B cell (primary cell): ENCODE measurements at regions of chr7 and their contacts with region 1.

Region 1: DNA sequence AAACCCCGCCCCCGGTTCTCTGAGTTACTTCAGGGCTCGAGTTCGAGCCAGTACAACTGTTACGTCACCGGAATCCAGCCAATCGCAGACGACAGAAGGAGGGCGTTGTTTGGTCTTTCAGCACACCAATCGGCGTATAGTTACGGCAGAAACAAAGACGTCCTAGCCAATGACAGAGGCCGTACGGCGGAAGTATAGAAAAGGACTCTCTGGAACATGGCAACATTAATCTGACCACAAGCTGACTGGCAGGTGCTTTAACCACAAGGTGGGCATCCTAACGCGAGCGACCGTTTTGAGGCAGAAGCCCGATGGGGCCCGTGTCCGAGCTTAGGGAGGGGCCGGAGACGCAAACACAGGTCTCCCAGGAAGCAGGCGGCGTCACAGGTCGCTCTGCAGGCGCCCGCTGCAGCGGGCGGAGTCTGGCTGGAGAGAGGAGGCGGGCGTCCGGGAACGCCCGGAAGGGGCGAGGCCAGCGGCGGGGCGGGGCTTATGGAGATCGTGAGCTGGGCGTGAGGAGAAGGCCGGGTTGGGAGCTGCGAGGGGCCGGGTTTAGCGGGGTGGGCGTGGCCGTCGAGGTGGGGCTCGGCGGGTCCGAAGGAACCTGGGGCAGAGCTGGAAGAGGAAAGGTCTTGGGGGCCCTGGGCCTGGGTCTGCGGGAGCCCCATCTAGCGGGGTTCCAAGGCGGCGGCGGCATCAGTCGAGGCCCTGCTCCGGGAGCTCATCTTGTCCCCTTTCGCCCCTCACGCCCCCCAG is at the start of gene MOSPD3:
- DNase-seq: peak; percentile 99
- ATAC-seq: peak; percentile 91
- H3K4me3 ChIP-seq: peak within 1 kb of the TSS; percentile 53 to 93 (median 84)
- H3K4me3 Mint-ChIP-seq: peak within 1 kb of the TSS; percentile 93
- H3K27ac ChIP-seq: peak within 1 kb of the TSS; percentile 82
- H3K27ac Mint-ChIP-seq: peak within 1 kb of the TSS; percentile 99
- H3K4me1 ChIP-seq: peaks cover 13 to 19% of the 10 kb centered on the region in 2 donors
- H3K4me1 Mint-ChIP-seq: peaks cover 18% of the 10 kb centered on the region
- H3K27me3 ChIP-seq: no peaks in the 10 kb centered on the region
- H3K27me3 Mint-ChIP-seq: no peaks in the 10 kb centered on the region
- CTCF ChIP-seq: no peak
- total RNA-seq, gene MOSPD3: 17.3 and 18.8 TPM in 2 replicates

Region 2: DNA sequence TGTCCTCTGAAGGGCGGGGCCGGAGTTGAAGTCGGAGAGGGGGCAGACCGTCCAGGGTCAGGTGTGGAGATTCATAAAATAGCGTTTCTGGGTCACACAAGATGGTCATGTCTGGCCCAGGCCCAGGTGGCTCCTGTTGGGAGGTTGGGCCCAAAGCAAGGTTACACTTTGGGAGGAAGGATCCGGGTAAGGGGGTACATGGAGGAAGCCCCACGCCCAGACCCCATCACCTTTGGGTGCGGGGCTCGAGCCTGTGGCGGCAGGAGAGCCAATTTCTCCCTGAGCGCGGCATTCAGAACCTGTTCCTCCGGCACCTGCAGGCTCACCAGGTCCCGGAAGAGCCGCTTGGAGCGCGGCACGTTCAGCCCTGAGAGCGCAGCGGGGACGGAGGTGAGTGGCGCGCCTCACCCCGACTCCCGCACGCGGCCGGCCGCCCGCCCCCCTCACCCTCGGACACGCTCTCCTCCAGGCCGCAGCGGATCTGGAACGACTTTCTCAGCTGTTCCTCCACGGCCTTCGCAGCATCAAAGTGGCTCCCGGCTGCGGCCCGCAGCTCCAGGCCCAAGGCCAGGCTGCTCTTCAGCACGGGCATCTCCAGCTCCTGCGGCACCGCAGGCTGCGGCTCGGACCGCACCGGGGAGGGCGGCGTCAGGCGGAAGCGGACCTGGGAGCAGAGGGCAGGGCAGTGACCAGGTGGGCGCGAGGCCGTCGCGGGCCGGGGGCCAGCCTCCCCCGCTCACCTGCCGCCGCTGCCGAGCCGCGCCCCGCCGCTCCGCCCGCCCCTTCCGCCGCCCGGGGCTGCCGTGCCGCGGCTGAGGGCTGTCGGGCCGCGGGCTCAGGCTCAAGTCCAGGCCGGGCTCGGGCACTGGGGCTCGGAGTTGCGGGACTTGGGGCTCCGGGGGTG is 176.5 kb before region 1 on chr7:
- CTCF ChIA-PET with region 1: interaction called, 3 read pairs
- POLR2A ChIA-PET with region 1: no interaction called
- intact Hi-C with region 1: loop called (anchors 1 kb)
- DNase-seq: peak; percentile 81
- ATAC-seq: peak; percentile 28
- H3K4me3 ChIP-seq: peak overlapping the region; percentile 39 to 96 (median 81)
- H3K4me3 Mint-ChIP-seq: peak overlapping the region; percentile 98
- H3K27ac ChIP-seq: peak overlapping the region; percentile 87 to 91
- H3K27ac Mint-ChIP-seq: peak overlapping the region; percentile 99
- H3K4me1 ChIP-seq: peaks cover 26 to 46% of the 10 kb centered on the region in 2 donors
- H3K4me1 Mint-ChIP-seq: peaks cover 50% of the 10 kb centered on the region
- H3K27me3 ChIP-seq: no peaks in the 10 kb centered on the region
- H3K27me3 Mint-ChIP-seq: no peaks in the 10 kb centered on the region
- CTCF ChIP-seq: no peak

Region 3: DNA sequence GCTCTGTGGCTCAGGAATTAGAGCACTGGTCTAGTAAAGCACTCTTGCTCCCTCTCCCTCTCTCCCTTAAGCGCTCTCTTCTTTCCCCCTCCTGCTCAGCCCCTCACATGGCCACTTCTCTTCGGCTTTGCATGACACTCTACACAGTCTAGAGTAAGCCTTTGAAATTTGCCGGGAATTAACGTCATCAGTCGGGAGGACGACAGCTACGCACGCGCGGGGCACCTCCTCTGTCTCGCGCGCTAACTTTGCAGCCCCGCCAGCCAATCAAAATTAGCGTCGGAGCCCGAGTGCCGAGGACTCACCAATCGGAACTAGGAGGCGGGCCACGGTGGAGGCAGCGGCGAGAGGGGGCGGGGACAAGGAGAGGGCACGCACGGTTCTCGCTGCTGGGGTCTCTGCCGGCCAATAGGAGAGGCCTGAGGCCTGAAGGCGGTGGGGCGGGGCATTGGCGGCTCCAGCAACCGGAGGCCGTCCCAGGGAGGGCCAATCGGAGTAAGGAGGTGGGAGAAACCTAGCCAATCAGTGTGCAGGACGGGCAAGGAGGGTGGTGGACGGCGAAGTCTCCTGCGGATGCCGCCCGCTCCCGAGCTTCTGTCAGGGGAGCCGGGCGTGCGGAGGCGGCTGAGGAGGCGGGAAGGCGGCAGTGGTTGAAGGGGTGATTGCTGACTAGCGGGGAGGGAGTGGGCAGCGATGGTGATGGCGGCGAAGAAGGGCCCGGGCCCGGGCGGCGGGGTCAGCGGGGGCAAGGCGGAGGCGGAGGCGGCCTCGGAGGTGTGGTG is 73.3 kb before region 1 on chr7 and contains the start of gene AGFG2:
- CTCF ChIA-PET with region 1: no interaction called
- POLR2A ChIA-PET with region 1: no interaction called
- intact Hi-C with region 1: loop called (anchors 1 kb)
- DNase-seq: peak; percentile 100
- ATAC-seq: peak; percentile 97
- H3K4me3 ChIP-seq: peak within 1 kb of the TSS; percentile 62 to 84 (median 72)
- H3K4me3 Mint-ChIP-seq: peak within 1 kb of the TSS; percentile 91
- H3K27ac ChIP-seq: peak within 1 kb of the TSS in 1 of 2 donors; percentile 42
- H3K27ac Mint-ChIP-seq: peak within 1 kb of the TSS; percentile 76
- H3K4me1 ChIP-seq: peaks cover 14 to 23% of the 10 kb centered on the region in 2 donors
- H3K4me1 Mint-ChIP-seq: peaks cover 36% of the 10 kb centered on the region
- H3K27me3 ChIP-seq: no peaks in the 10 kb centered on the region
- H3K27me3 Mint-ChIP-seq: no peaks in the 10 kb centered on the region
- CTCF ChIP-seq: no peak
- total RNA-seq, gene AGFG2: 11.0 and 11.6 TPM in 2 replicates

Region 4: GRCh38 chr7:100626530-100627237 is 14.5 kb after region 1 on chr7:
- CTCF ChIA-PET with region 1: interaction called, 7 read pairs
- POLR2A ChIA-PET with region 1: interaction called, 10 read pairs
- intact Hi-C with region 1: loop called (anchors 1 kb)
- DNase-seq: peak; percentile 83
- ATAC-seq: peak; percentile 99
- H3K4me3 ChIP-seq: peak overlapping the region in 4 of 5 experiments; percentile 21 to 53 (median 44)
- H3K4me3 Mint-ChIP-seq: peak overlapping the region; percentile 80
- H3K27ac ChIP-seq: peak overlapping the region in 1 of 2 donors; percentile 55
- H3K27ac Mint-ChIP-seq: no peak overlapping the region
- H3K4me1 ChIP-seq: peaks cover 12 to 13% of the 10 kb centered on the region in 2 donors
- H3K4me1 Mint-ChIP-seq: peaks cover 11% of the 10 kb centered on the region
- H3K27me3 ChIP-seq: no peaks in the 10 kb centered on the region
- H3K27me3 Mint-ChIP-seq: no peaks in the 10 kb centered on the region
- CTCF ChIP-seq: no peak

Region 5: GRCh38 chr7:100632951-100633717 is 21.0 kb after region 1 on chr7:
- CTCF ChIA-PET with region 1: interaction called, 26 read pairs
- POLR2A ChIA-PET with region 1: interaction called, 13 read pairs
- intact Hi-C with region 1: loop called (anchors 1 kb)
- DNase-seq: peak; percentile 77
- ATAC-seq: peak; percentile 77
- H3K4me3 ChIP-seq: peak overlapping the region in 4 of 5 experiments; percentile 62 to 82 (median 72)
- H3K4me3 Mint-ChIP-seq: peak overlapping the region; percentile 90
- H3K27ac ChIP-seq: peak overlapping the region in 1 of 2 donors; percentile 48
- H3K27ac Mint-ChIP-seq: peak overlapping the region; percentile 83
- H3K4me1 ChIP-seq: peaks cover 6 to 15% of the 10 kb centered on the region in 2 donors
- H3K4me1 Mint-ChIP-seq: peaks cover 10% of the 10 kb centered on the region
- H3K27me3 ChIP-seq: peaks cover 0 to 3% (median 0%) of the 10 kb centered on the region in 4 experiments
- H3K27me3 Mint-ChIP-seq: no peaks in the 10 kb centered on the region
- CTCF ChIP-seq: no peak

Region 6: DNA sequence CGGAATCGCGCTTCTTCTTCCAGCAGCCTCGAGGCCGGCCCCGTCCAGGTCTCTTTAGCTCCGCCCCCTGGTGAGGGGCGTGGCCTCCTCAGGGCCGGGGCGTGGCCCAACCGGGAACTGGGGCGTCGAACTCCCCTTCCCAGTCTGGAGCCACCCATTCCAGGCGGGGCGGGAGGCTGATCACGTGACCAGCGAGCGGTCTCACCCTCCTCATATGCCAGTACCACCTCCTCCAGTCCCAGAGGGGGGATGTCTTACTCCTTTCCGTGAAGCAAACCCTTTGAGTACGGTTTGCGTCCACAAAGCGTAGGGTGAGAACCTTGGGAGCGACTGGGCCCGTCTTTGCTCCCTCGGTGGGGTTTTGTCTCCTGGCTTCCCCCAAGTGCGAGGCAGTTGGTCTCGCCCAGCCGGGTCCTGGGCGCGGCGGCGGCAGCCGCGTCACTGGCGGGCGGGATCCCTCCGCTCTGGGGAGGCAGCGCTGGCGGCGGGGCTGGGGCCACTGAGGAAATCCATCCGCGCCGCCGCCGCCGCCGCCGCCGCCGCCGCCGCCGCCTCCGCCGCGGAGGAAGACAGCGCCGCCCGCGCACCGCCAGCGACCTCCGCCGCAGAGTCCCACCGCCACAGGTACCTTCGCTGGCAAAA is 61.3 kb after region 1 on chr7 and contains the start of gene GNB2:
- CTCF ChIA-PET with region 1: no interaction called
- POLR2A ChIA-PET with region 1: interaction called, 10 read pairs
- intact Hi-C with region 1: loop called (anchors 1 kb)
- DNase-seq: peak; percentile 99
- ATAC-seq: peak; percentile 65
- H3K4me3 ChIP-seq: peak within 1 kb of the TSS; percentile 53 to 99 (median 98)
- H3K4me3 Mint-ChIP-seq: peak within 1 kb of the TSS; percentile 96
- H3K27ac ChIP-seq: peak within 1 kb of the TSS; percentile 89 to 97
- H3K27ac Mint-ChIP-seq: peak within 1 kb of the TSS; percentile 97
- H3K4me1 ChIP-seq: peaks cover 0 to 6% of the 10 kb centered on the region in 2 donors
- H3K4me1 Mint-ChIP-seq: peaks cover 8% of the 10 kb centered on the region
- H3K27me3 ChIP-seq: no peaks in the 10 kb centered on the region
- H3K27me3 Mint-ChIP-seq: no peaks in the 10 kb centered on the region
- CTCF ChIP-seq: no peak
- total RNA-seq, gene GNB2: 127 TPM in 2 replicates

Region 7: DNA sequence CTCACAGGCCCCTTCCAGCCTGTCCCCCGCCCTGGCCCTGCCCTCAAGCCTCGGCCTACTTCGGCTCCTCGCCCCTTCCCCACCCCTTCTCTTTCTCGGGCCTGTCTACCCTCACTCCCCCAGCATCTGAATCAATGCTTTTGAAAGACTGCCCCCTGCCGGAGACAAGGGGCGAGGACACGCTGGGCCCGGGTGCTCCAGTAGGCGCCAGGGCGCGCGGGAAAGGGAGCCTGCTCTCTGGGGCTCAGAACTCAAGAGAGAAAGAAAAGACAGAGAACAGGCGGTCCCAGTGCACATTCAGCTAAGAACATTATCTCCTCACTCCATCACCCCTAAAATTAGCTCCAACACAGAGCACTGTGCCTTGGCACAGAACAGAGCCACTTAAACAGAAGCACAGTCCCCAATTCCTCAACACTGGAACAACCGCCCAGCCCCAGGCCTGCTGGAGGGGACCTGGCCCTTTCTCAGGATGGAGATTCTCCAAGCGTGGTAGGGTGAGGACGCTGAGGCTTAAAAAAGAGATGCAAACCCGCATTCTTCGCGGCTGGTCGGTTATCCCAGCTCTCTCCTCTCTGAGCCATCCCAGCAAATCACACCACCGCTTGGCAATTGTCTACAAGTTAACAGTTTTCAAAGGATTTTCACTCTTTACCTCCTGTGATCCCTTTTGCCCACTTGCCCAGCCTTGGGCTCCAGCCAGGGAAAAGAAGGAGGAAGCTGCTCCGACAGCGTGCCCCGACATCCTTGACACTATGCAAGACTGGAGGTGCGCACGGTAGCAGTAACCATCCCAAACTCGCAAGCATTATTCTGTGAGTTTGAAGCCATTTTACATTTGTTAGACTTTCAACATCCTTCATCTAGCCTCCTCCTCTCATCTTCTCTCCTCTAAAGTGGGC is 79.8 kb after region 1 on chr7:
- CTCF ChIA-PET with region 1: interaction called, 19 read pairs
- POLR2A ChIA-PET with region 1: no interaction called
- intact Hi-C with region 1: loop called (anchors 1 kb)
- DNase-seq: peak; percentile 86
- ATAC-seq: peak; percentile 60
- H3K4me3 ChIP-seq: peak overlapping the region in 2 of 5 experiments; percentile 58 to 79
- H3K4me3 Mint-ChIP-seq: peak overlapping the region; percentile 89
- H3K27ac ChIP-seq: no peak overlapping the region
- H3K27ac Mint-ChIP-seq: peak overlapping the region; percentile 92
- H3K4me1 ChIP-seq: peaks cover 52 to 55% of the 10 kb centered on the region in 2 donors
- H3K4me1 Mint-ChIP-seq: peaks cover 51% of the 10 kb centered on the region
- H3K27me3 ChIP-seq: no peaks in the 10 kb centered on the region
- H3K27me3 Mint-ChIP-seq: no peaks in the 10 kb centered on the region
- CTCF ChIP-seq: peak; percentile 88